ENCODE measurements at regions of chr17 and their contacts with region 1.

Region 1: DNA sequence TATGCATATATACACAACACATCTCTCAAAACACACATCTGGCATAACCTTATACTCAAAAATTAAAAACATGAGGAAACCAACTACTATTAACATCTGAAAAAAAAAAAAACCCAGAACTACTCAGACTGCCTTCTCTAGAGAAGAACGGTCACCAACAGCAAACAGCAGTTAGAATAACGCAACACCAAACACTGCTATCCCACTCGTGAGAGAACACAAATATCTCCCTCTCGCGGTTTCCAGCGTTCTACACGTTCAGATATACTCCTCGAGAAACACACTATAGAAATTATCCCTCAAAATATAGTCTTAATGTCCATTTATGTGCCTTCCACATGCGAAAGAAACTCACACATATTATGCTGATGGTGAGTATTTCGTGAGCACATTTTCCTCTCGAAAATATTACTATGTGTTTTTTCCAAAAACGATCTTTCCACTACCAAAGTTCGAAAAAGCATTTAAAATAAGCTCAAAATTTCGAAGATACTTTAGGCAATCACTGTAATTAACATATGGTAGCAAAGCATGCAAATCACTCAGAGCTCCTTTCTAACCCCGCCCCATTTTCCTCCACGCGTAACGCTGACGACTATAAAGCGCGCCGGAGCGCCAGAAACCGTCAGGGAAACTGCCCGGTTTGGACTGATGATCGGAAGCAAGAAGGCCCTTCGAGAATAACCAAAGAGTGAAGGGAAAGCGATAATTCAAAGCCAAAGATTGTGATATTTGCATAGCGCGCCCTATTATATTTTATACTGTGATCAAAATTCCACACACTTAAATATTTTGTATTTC is 60.1 kb downstream of the TEX14 start:
- DNase-seq: peak; percentile 97
- H3K4me3 Mint-ChIP-seq: no peak overlapping the region
- H3K27ac Mint-ChIP-seq: no peak overlapping the region
- H3K4me1 Mint-ChIP-seq: peaks cover 3% of the 10 kb centered on the region
- H3K27me3 Mint-ChIP-seq: peaks cover 2% of the 10 kb centered on the region

Region 2: GRCh38 chr17:58317421-58318064 is 314.2 kb before region 1 on chr17:
- CTCF ChIA-PET with region 1: no interaction called
- POLR2A ChIA-PET with region 1: interaction called, 14 read pairs
- DNase-seq: peak; percentile 78
- H3K4me3 Mint-ChIP-seq: no peak overlapping the region
- H3K27ac Mint-ChIP-seq: peak overlapping the region; percentile 83
- H3K4me1 Mint-ChIP-seq: peaks cover 21% of the 10 kb centered on the region
- H3K27me3 Mint-ChIP-seq: no peaks in the 10 kb centered on the region

Region 3: DNA sequence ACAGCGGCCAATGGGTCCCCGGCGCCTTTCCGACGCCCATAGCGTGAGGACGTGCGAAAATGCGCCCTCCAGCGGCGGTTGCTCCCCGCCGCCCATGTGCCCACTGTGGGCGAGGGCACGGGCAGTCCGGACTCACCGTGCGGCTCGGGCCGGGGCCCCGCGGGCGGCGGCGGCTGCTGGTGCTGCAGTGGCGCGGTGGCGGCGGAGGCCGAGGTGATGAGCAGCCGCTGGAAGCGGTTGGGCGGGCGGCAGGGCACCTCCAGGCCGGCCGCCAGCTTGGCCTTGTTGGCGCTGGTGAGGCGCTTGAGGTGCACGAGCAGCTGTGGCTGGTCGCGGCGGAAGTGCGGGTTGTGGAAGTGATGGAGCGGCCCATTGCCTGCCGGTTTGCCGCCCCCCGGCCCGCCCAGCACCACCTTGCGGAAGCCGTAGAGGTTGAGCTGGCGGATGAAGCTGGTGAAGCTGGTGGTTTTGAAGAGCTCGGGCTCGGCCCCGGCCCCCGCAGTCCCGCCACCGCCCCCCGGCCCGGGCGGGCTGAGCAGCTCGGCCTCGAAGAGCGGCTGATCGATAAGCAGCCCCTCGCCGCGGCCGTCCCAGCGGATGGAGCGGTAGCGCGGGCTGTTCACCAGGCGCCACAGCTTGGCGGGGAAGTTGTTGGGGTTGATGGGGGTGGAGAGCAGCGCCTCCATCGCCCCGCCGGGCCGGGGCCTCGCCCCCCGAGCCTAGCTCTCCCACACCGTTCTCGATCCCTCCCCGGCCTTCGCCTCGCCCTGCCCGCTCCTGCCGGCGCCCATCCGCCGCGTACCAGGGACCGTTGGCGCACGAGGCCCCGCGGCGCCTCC is 143.9 kb before region 1 on chr17 and contains the start of gene HSF5:
- CTCF ChIA-PET with region 1: no interaction called
- POLR2A ChIA-PET with region 1: interaction called, 15 read pairs
- DNase-seq: peak; percentile 75
- H3K4me3 Mint-ChIP-seq: peak within 1 kb of the TSS; percentile 30
- H3K27ac Mint-ChIP-seq: no peak within 1 kb of the TSS
- H3K4me1 Mint-ChIP-seq: peaks cover 17% of the 10 kb centered on the region
- H3K27me3 Mint-ChIP-seq: no peaks in the 10 kb centered on the region
- total RNA-seq, gene HSF5: 0.40 to 0.70 TPM

Region 4: DNA sequence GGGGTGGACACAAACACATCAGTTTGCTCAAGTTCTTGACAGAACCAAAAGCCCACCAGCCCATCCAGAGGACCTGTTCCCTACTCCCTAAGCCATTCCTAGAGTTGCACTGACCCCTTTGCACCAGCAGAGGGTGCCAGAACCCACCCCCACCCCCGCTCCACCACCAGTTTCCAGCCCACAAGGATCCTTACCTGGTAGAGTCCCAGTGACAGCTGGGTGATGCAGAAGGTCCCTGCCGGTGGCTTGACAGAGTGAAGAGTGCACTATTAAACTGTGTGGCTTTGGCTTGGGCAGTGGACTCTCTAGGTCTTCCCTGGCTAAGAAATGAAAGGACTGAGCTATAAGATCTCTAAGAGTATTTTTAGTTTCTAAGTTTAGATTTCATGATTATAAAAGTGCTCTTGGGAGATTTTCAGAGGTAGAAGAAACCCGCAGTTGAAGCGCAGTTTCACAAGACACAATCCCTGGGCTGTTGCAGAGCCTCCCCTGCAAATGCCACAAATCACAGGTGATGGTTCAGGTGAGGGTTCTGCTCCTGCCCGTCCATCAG is 43.9 kb before region 1 on chr17:
- CTCF ChIA-PET with region 1: interaction called, 7 read pairs
- POLR2A ChIA-PET with region 1: interaction called, 96 read pairs
- DNase-seq: peak; percentile 63
- H3K4me3 Mint-ChIP-seq: no peak overlapping the region
- H3K27ac Mint-ChIP-seq: no peak overlapping the region
- H3K4me1 Mint-ChIP-seq: peaks cover 4% of the 10 kb centered on the region
- H3K27me3 Mint-ChIP-seq: peaks cover 2% of the 10 kb centered on the region

Region 5: DNA sequence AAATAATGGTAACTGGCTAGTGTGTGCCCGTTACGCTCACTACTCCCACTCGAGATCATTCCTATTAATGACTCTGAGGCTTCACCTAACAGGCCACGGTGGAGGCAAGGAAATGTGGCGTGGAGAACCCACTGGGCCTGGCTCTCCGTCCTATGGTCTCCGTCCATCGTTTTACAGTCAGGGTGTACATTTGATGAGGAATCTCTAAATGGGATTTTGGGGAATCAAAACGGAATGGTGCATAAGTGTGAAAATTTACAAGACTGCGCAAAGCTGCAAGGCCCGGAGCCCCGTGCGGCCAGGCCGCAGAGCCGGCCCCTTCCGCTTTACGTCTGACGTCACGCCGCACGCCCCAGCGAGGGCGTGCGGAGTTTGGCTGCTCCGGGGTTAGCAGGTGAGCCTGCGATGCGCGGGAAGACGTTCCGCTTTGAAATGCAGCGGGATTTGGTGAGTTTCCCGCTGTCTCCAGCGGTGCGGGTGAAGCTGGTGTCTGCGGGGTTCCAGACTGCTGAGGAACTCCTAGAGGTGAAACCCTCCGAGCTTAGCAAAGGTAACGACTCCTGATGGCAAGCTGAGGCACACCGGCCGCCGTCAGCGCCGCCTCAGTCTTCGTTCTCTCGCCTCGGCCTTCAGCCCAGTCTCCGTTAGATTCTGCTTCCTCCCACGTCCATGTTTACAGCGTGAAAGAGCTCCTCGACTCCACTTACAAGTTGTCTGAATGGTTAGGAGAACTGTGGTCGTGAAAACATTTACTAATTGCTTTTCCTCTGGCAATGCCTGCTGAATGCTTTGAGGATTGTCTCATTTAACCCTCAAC is 60.7 kb after region 1 on chr17 and contains the start of gene RAD51C:
- CTCF ChIA-PET with region 1: interaction called, 4 read pairs
- POLR2A ChIA-PET with region 1: interaction called, 251 read pairs
- DNase-seq: peak; percentile 92
- H3K4me3 Mint-ChIP-seq: peak within 1 kb of the TSS; percentile 90
- H3K27ac Mint-ChIP-seq: peak within 1 kb of the TSS; percentile 88
- H3K4me1 Mint-ChIP-seq: peaks cover 40% of the 10 kb centered on the region
- H3K27me3 Mint-ChIP-seq: no peaks in the 10 kb centered on the region
- total RNA-seq, gene RAD51C: 55.2 to 59.6 TPM

Region 6: GRCh38 chr17:58808645-58809563 is 177.2 kb after region 1 on chr17:
- CTCF ChIA-PET with region 1: no interaction called
- POLR2A ChIA-PET with region 1: no interaction called
- DNase-seq: no peak
- H3K4me3 Mint-ChIP-seq: no peak overlapping the region
- H3K27ac Mint-ChIP-seq: no peak overlapping the region
- H3K4me1 Mint-ChIP-seq: no peaks in the 10 kb centered on the region
- H3K27me3 Mint-ChIP-seq: peaks cover 24% of the 10 kb centered on the region

Region 7: DNA sequence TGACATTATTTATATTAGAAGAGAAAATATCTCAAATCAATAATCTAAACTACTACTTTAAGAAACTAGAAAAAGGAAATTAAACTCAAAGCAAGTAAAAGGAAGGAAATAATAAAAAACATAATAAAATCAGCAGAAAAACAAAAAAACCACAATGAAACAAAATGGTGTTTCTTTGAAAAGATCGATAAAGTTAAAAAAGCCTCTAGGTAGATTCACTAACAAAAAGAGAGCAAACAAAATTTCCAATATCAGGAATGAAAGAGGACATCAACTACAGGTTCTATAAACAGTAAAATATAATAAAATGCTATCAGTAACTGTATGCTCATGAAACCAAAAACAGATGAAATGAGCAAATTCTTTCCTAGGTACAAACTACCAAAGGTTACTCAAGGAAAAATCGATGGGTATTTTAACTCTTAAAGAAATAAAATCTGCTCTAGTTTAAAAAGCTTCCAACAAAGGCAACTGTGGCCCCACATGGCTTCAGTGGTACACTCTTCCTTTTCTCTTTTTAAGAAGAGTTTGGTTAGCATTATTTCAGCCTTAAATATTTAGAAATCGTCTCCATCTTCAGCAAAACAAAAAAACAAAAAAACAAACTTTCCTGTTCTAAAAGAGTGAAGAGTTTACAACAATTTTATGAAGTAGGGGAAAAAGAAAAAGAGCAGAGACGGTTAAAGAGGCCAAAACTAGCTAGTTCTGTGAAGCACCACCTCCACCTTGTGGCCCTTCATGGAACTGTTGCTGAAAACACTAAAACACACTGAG is 372.8 kb after region 1 on chr17:
- CTCF ChIA-PET with region 1: no interaction called
- POLR2A ChIA-PET with region 1: interaction called, 60 read pairs
- DNase-seq: peak; percentile 76
- H3K4me3 Mint-ChIP-seq: no peak overlapping the region
- H3K27ac Mint-ChIP-seq: peak overlapping the region; percentile 0
- H3K4me1 Mint-ChIP-seq: peaks cover 33% of the 10 kb centered on the region
- H3K27me3 Mint-ChIP-seq: no peaks in the 10 kb centered on the region